ENCODE measurements at regions of chr14 and their contacts with region 1.

Region 1: GRCh38 chr14:22852940-22853767 is 16.8 kb downstream of the MMP14 start:
- DNase-seq: peak; percentile 84 to 95 (median 87)
- ATAC-seq: peak; percentile 51 to 70 (median 66)
- H3K4me3 ChIP-seq: peak overlapping the region in 11 of 12 donors; percentile 13 to 69 (median 54)
- H3K27ac ChIP-seq: peak overlapping the region in 7 of 12 donors; percentile 27 to 68 (median 40)
- H3K4me1 ChIP-seq: peaks cover 3 to 51% (median 44%) of the 10 kb centered on the region in 12 donors
- H3K27me3 ChIP-seq: no peaks in the 10 kb centered on the region
- CTCF ChIP-seq: peak; percentile 74 to 97 (median 90)
- POLR2A ChIP-seq: no peak

Region 2: DNA sequence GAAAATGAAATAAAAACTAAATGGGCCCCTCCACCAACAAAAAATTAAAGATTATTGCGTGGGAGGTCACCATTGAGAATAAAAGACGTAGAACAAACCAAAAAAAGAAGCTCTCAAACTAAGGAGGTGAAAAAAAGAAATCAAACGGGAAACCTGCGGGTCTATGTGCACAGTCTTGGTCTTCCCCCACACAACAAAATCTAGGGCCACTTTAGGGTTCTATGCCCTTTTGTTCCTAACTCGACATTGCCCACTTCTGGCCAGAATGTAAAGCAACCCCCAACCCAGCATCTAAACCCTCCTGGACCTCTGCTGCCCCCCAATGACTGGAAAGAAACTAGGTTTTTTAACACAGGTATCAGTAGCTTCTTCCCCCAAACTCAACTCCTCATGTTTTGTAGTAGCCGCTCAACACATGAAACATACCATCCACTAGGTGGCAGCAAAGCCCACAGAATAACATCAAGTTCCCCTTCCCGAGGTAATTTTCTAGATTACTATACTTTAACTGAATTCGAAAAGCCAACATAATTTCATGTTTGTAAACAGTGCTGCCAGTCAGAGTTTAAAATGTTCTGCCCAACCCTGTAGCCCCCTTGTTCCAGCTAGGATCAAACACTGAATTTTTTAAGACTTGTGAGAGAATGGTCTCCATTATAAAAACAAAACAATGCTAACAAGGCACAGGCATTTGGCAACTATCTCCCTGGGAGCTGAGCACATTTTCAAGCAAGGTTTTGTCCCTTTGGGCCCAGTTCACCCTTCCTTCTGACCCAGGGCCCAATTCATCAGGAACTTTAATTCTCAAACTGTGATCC is 282.8 kb before region 1 on chr14:
- intact Hi-C with region 1: loop called in 5 of 10 experiments (anchors 5 to 10 kb)
- DNase-seq: peak in 3 of 5 donors; percentile 52 to 78 (median 77)
- ATAC-seq: peak; percentile 47 to 81 (median 72)
- H3K4me3 ChIP-seq: peak overlapping the region in 1 of 12 donors; percentile 23
- H3K27ac ChIP-seq: peak overlapping the region in 5 of 12 donors; percentile 9 to 83 (median 30)
- H3K4me1 ChIP-seq: peaks cover 0 to 48% (median 8%) of the 10 kb centered on the region in 12 donors
- H3K27me3 ChIP-seq: no peaks in the 10 kb centered on the region
- CTCF ChIP-seq: peak; percentile 70 to 86 (median 78)
- POLR2A ChIP-seq: no peak

Region 3: DNA sequence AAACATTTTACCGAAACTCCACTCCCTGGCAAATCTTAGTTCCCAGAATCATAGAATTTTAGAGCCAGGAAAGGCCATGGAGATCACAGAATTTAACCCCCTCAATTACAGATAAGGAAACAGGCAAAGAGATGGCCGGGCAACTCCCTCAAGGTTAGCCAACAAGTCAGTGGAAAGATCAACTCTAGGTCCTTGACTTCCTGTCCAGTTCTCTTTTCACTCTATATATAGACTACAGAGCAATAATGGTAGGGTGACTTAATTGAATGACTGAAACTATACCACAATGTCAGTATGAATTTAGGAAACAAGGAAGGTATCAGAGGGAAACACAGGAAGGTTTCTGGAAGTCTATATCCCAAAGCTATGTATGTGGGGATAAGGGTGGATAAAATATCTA is 75.1 kb before region 1 on chr14:
- intact Hi-C with region 1: loop called in 1 of 10 experiments (anchors 10 kb)
- DNase-seq: no peak
- ATAC-seq: peak in 2 of 4 donors; percentile 25 to 49
- H3K4me3 ChIP-seq: no peak overlapping the region
- H3K27ac ChIP-seq: no peak overlapping the region
- H3K4me1 ChIP-seq: peaks cover 0 to 49% (median 0%) of the 10 kb centered on the region in 12 donors
- H3K27me3 ChIP-seq: no peaks in the 10 kb centered on the region
- CTCF ChIP-seq: no peak
- POLR2A ChIP-seq: no peak

Region 4: GRCh38 chr14:22829661-22830442 is 23.3 kb before region 1 on chr14 and contains the start of gene MRPL52:
- intact Hi-C with region 1: loop called in 1 of 10 experiments (anchors 2 kb)
- DNase-seq: peak; percentile 91 to 94 (median 92)
- ATAC-seq: peak; percentile 88 to 98 (median 98)
- H3K4me3 ChIP-seq: peak within 1 kb of the TSS; percentile 66 to 93 (median 78)
- H3K27ac ChIP-seq: peak within 1 kb of the TSS; percentile 53 to 87 (median 80)
- H3K4me1 ChIP-seq: peaks cover 0 to 17% (median 11%) of the 10 kb centered on the region in 12 donors
- H3K27me3 ChIP-seq: no peaks in the 10 kb centered on the region
- CTCF ChIP-seq: no peak
- POLR2A ChIP-seq: peak in 1 of 2 donors; percentile 20
- total RNA-seq, gene MRPL52: 80.4 to 185 (median 107) TPM

Measured in heart left ventricle (tissue), 16 donors.